ENCODE measurements at regions of chr5 and their contacts with region 1.

Region 1: DNA sequence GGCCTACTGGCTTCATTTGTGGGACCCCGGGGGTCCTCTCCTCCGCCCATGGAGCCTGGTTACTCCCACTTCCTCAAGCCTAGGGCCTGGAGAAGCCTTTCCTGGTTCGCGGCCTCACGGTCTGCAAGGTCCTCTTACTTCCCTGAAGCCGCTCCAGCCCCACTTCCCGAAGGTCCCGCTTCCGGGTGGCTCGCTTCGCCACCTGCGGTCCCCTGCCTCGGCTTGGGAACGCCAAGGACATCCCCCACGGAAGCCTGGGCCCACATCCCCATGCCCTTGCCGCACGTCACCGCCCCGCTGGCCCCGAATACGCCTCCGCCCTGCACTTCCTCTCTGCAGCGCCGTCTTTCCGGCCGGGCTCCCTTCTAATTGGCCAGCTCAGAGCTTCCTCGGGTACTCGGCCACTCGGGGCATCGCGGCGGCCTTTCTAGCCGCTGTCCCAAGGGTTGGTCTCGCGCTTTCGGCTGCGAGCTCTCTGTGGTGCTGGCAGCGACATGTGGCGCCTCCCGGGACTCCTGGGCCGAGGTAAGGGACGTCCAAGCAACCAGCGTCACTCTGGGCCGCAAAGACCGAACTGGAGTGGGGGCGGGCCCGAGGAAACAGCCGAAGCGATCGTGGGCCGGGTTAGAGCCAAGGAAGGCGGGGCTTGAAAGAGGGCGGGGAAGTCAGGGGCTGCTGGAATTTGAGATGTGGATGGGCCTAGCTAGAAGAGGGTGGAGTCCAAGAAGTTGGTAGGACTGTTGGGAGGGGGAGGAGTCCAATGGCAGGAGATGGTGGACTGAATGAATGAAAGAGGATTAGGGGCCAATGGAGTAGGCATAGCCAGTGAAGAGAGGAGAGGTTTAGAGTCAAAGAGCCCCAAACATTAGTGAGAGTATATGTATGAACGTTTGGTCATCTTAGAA is at the start of gene DELE1:
- DNase-seq: peak; percentile 86 to 92
- ATAC-seq: peak; percentile 96 to 98 (median 96)
- H3K4me3 ChIP-seq: peak within 1 kb of the TSS; percentile 93
- H3K4me3 Mint-ChIP-seq: peak within 1 kb of the TSS; percentile 97
- H3K27ac ChIP-seq: peak within 1 kb of the TSS; percentile 97
- H3K27ac Mint-ChIP-seq: peak within 1 kb of the TSS; percentile 97
- H3K4me1 ChIP-seq: peaks cover 18% of the 10 kb centered on the region
- H3K4me1 Mint-ChIP-seq: peaks cover 18 to 34% of the 10 kb centered on the region in 2 donors
- H3K27me3 ChIP-seq: no peaks in the 10 kb centered on the region
- H3K27me3 Mint-ChIP-seq: peaks cover 0 to 4% of the 10 kb centered on the region in 2 donors
- CTCF ChIP-seq: no peak
- total RNA-seq, gene DELE1: 106 to 125 (median 115) TPM

Region 2: DNA sequence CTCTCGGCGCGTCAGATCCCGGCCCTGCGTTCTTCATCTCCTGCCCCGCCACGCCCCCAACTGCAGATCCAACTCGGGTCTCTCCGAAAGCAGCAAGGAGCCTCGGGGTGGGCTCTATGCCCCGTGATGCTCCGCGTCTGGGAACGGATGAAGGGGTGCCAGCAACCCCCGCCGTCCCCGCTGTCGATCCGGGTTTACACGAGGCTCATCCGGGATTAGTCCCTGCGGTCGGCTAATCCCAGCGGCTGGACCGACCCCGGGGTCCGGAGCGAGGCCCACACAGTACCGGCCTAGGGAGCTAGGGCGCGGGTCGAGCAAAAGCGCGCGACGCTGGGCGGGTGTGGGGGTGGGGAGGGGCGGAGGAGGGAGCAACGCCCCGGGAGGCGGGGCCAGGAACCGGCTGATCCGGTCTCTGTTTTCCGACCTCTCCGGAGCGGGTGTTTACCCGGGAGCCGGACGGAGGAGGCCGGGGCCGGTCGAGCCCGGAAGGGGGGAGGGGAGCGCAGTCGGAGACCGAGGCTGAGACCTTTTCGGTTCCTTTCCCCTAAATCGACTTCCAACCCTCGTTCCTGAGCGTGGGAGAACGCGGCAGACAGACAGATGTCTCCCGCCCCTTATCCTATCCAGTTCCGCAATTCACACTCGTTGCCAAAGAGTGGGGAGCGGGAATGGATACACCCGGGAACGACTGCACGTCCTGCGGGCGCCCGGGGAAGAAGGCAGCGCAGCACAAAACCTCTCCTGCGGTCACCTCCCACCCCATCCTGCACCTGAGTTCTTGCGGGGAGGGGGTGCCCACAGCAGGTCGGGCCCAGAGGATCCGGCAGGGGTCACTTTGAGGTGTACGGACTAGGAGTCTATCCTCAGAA is 74.1 kb before region 1 on chr5:
- intact Hi-C with region 1: loop called (anchors 2 kb)
- DNase-seq: peak; percentile 60 to 84
- ATAC-seq: peak; percentile 81 to 85 (median 84)
- H3K4me3 ChIP-seq: peak overlapping the region; percentile 89
- H3K4me3 Mint-ChIP-seq: peak overlapping the region; percentile 91
- H3K27ac ChIP-seq: peak overlapping the region; percentile 78
- H3K27ac Mint-ChIP-seq: peak overlapping the region; percentile 78 to 82
- H3K4me1 ChIP-seq: peaks cover 16% of the 10 kb centered on the region
- H3K4me1 Mint-ChIP-seq: peaks cover 5 to 18% of the 10 kb centered on the region in 2 donors
- H3K27me3 ChIP-seq: no peaks in the 10 kb centered on the region
- H3K27me3 Mint-ChIP-seq: no peaks in the 10 kb centered on the region
- CTCF ChIP-seq: no peak

Region 3: GRCh38 chr5:141968914-141969608 is 45.4 kb after region 1 on chr5 and contains the start of gene RNF14:
- intact Hi-C with region 1: loop called (anchors 2 kb)
- DNase-seq: peak; percentile 92 to 96
- ATAC-seq: peak; percentile 94 to 97 (median 95)
- H3K4me3 ChIP-seq: peak within 1 kb of the TSS; percentile 97
- H3K4me3 Mint-ChIP-seq: peak within 1 kb of the TSS; percentile 99
- H3K27ac ChIP-seq: peak within 1 kb of the TSS; percentile 98
- H3K27ac Mint-ChIP-seq: peak within 1 kb of the TSS; percentile 96 to 98
- H3K4me1 ChIP-seq: peaks cover 12% of the 10 kb centered on the region
- H3K4me1 Mint-ChIP-seq: peaks cover 27 to 30% of the 10 kb centered on the region in 2 donors
- H3K27me3 ChIP-seq: no peaks in the 10 kb centered on the region
- H3K27me3 Mint-ChIP-seq: no peaks in the 10 kb centered on the region
- CTCF ChIP-seq: peak; percentile 97
- total RNA-seq, gene RNF14: 20.6 to 29.2 (median 21.3) TPM

Measured in natural killer cell (primary cell).